Naive thymus-derived CD4-positive, alpha-beta T cell (primary cell): ENCODE measurements at regions of chr19 and their contacts with region 1.

Region 1: DNA sequence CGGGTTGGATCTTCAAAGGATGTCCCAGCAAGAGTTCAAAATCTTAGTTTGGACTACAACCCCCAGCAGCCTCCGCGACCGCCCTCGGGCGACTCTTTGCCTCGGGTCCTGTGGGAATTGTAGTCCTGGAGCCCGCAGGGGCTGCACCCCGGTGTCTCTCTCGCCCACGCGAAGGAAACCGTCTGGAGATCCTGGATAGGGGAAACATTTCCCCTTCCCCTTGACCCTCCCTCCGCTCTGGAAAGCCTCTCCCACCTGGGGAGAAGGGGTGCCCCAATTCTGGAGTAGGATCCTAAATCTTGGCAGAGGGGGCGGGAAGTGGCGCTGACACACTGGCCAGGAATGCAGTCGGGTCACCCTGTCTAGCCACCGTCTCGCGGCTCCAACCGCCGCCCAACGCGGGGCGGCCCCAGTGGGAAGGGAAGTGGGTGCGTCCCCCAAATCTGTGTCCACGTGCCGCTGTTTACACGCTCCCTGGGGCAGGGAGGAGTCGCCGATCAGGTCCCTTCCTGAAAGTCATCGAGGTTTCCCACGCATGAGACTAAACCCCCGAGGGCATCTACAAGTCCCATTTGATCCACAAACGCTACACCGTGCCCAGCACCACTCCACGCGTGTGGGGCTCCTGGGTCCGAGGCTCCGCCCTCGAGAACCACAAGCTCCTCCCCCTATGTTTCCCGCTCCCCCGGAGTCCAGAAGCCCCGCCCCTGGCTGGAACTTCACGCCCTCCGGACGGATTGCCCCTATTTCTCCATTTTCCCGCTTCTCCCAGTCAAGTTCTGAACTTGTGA is 761 bp upstream of the PPP1R13L start:
- DNase-seq: peak; percentile 62 to 88 (median 81)
- ATAC-seq: peak; percentile 75
- H3K4me3 ChIP-seq: peak overlapping the region; percentile 77
- H3K4me3 Mint-ChIP-seq: peak overlapping the region; percentile 91 to 99 (median 97)
- H3K27ac ChIP-seq: peak overlapping the region; percentile 71
- H3K27ac Mint-ChIP-seq: peak overlapping the region; percentile 90 to 99 (median 94)
- H3K4me1 ChIP-seq: peaks cover 16 to 25% of the 10 kb centered on the region in 2 donors
- H3K4me1 Mint-ChIP-seq: peaks cover 28 to 53% (median 32%) of the 10 kb centered on the region in 7 donors
- H3K27me3 ChIP-seq: peaks cover 10 to 18% of the 10 kb centered on the region in 2 donors
- H3K27me3 Mint-ChIP-seq: peaks cover 15 to 27% (median 21%) of the 10 kb centered on the region in 5 donors

Region 2: GRCh38 chr19:44890366-44891015 is 515.1 kb before region 1 on chr19:
- CTCF ChIA-PET with region 1: no interaction called
- POLR2A ChIA-PET with region 1: no interaction called
- intact Hi-C with region 1: loop called in 1 of 2 experiments (anchors 1 kb)
- DNase-seq: peak; percentile 97 to 100 (median 100)
- ATAC-seq: peak; percentile 86
- H3K4me3 ChIP-seq: peak overlapping the region; percentile 69
- H3K4me3 Mint-ChIP-seq: peak overlapping the region; percentile 83 to 93 (median 89)
- H3K27ac ChIP-seq: peak overlapping the region; percentile 84
- H3K27ac Mint-ChIP-seq: peak overlapping the region; percentile 90 to 96 (median 94)
- H3K4me1 ChIP-seq: peaks cover 10 to 20% of the 10 kb centered on the region in 2 donors
- H3K4me1 Mint-ChIP-seq: peaks cover 18 to 44% (median 35%) of the 10 kb centered on the region in 7 donors
- H3K27me3 ChIP-seq: no peaks in the 10 kb centered on the region
- H3K27me3 Mint-ChIP-seq: no peaks in the 10 kb centered on the region

Region 3: GRCh38 chr19:45250832-45251451 is 154.7 kb before region 1 on chr19 and contains the start of gene MARK4:
- CTCF ChIA-PET with region 1: no interaction called
- POLR2A ChIA-PET with region 1: no interaction called
- intact Hi-C with region 1: loop called in 1 of 2 experiments (anchors 5 kb)
- DNase-seq: peak in 8 of 9 donors; percentile 32 to 70 (median 51)
- ATAC-seq: peak; percentile 80
- H3K4me3 ChIP-seq: peak within 1 kb of the TSS; percentile 63
- H3K4me3 Mint-ChIP-seq: peak within 1 kb of the TSS; percentile 87 to 96 (median 94)
- H3K27ac ChIP-seq: peak within 1 kb of the TSS; percentile 72
- H3K27ac Mint-ChIP-seq: peak within 1 kb of the TSS; percentile 28 to 90 (median 81)
- H3K4me1 ChIP-seq: peaks cover 19 to 20% of the 10 kb centered on the region in 2 donors
- H3K4me1 Mint-ChIP-seq: peaks cover 23 to 42% (median 35%) of the 10 kb centered on the region in 7 donors
- H3K27me3 ChIP-seq: no peaks in the 10 kb centered on the region
- H3K27me3 Mint-ChIP-seq: peaks cover 0 to 5% (median 0%) of the 10 kb centered on the region in 5 donors
- total RNA-seq, gene MARK4: 22.4 to 39.2 (median 25.5) TPM

Region 4: DNA sequence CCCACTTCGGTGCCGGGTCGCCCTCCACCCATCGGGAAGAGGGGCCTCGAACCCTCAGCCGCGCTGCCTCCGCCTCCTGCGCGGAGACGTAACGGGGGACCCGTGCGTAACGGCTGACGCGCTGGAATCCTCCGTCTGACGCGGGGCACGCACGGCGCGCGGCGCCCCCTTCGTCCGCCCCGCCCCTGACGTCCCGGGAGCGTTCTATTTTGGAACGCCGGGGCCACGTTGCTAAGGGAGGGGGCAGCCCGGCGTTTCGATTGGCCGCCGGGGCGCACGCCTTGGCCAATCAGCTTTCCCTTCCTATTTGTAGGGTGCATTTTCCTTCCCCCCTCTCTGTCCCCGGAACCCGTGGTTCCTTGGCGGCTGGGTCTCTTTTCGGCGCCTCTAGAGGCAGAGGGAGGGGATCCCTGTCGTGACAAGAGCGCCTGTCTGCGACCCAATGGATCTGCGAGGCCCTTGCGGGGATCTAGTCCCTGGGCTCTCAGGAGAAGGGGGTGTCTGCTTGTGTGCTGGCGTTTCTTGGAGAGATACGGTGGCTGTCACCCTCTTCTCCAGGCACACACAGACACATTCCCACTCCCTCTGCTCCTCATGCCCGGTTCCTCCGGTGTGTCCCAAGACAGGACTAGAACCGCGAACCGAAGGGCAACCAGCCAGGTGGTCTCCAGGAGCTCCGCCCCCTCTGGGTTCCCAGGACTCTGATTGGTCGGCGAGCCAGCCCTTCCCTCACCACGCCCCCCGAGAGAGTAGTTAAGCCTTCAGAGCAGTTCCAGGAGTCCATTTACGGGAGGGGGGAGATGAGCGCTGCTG is 63.7 kb after region 1 on chr19:
- CTCF ChIA-PET with region 1: no interaction called
- POLR2A ChIA-PET with region 1: no interaction called
- intact Hi-C with region 1: loop called in 1 of 2 experiments (anchors 1 kb)
- DNase-seq: peak; percentile 79 to 98 (median 97)
- ATAC-seq: peak; percentile 70
- H3K4me3 ChIP-seq: peak overlapping the region; percentile 99
- H3K4me3 Mint-ChIP-seq: peak overlapping the region; percentile 87 to 96 (median 94)
- H3K27ac ChIP-seq: peak overlapping the region; percentile 98
- H3K27ac Mint-ChIP-seq: peak overlapping the region; percentile 90 to 100 (median 99)
- H3K4me1 ChIP-seq: peaks cover 10 to 16% of the 10 kb centered on the region in 2 donors
- H3K4me1 Mint-ChIP-seq: peaks cover 5 to 39% (median 19%) of the 10 kb centered on the region in 7 donors
- H3K27me3 ChIP-seq: no peaks in the 10 kb centered on the region
- H3K27me3 Mint-ChIP-seq: peaks cover 9 to 57% (median 17%) of the 10 kb centered on the region in 5 donors

Region 5: DNA sequence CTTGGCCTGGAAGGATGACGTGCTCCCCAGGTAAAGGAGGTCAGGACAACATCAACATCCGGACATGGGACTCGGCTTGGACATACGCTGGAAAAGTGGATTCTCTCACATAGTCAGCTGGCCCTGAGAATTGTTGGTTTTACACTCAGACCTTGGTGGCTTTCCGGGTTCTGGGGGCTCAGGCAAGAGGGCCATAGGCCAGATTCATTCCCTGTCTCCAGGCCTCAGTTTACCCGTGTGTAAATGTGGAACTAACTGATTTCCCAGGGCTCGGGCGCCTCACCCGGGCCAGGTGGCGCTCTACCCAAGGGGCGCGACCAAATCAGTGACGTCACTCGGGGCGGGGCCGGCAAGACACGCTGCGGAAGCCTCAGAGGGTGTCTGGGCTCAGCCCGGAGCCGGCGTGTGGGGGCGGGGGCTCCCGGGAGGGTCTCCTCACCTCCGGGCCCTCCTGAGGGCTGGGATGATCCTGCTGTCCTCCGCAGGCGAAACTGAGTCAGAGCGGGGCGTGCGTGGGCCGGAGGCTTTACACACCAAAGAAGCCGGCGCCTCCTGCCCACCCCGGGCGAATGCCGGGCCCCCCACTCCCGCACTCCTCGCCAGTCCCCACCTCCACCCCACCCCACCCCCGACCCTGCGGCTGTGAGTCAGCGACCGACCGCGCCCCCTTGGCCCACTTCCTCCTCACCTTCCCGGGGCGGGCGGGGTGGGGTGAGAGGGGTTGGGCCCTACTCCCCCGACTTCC is 100.8 kb after region 1 on chr19:
- CTCF ChIA-PET with region 1: no interaction called
- POLR2A ChIA-PET with region 1: no interaction called
- intact Hi-C with region 1: loop called (anchors 1 kb)
- DNase-seq: peak; percentile 95 to 99 (median 98)
- ATAC-seq: peak; percentile 88
- H3K4me3 ChIP-seq: peak overlapping the region; percentile 99
- H3K4me3 Mint-ChIP-seq: peak overlapping the region; percentile 91 to 96 (median 94)
- H3K27ac ChIP-seq: peak overlapping the region; percentile 87
- H3K27ac Mint-ChIP-seq: peak overlapping the region; percentile 91 to 98 (median 97)
- H3K4me1 ChIP-seq: peaks cover 14 to 20% of the 10 kb centered on the region in 2 donors
- H3K4me1 Mint-ChIP-seq: peaks cover 29 to 46% (median 34%) of the 10 kb centered on the region in 7 donors
- H3K27me3 ChIP-seq: no peaks in the 10 kb centered on the region
- H3K27me3 Mint-ChIP-seq: no peaks in the 10 kb centered on the region

Region 6: GRCh38 chr19:45670670-45671453 is 265.2 kb after region 1 on chr19:
- CTCF ChIA-PET with region 1: no interaction called
- POLR2A ChIA-PET with region 1: no interaction called
- intact Hi-C with region 1: no loop called
- DNase-seq: peak in 4 of 9 donors; percentile 14 to 87 (median 31)
- ATAC-seq: peak; percentile 58
- H3K4me3 ChIP-seq: no peak overlapping the region
- H3K4me3 Mint-ChIP-seq: peak overlapping the region in 8 of 10 donors; percentile 39 to 96 (median 74)
- H3K27ac ChIP-seq: no peak overlapping the region
- H3K27ac Mint-ChIP-seq: peak overlapping the region in 1 of 9 donors; percentile 13
- H3K4me1 ChIP-seq: peaks cover 15 to 25% of the 10 kb centered on the region in 2 donors
- H3K4me1 Mint-ChIP-seq: peaks cover 30 to 39% (median 32%) of the 10 kb centered on the region in 7 donors
- H3K27me3 ChIP-seq: no peaks in the 10 kb centered on the region
- H3K27me3 Mint-ChIP-seq: peaks cover 0 to 22% (median 17%) of the 10 kb centered on the region in 5 donors

Region 7: DNA sequence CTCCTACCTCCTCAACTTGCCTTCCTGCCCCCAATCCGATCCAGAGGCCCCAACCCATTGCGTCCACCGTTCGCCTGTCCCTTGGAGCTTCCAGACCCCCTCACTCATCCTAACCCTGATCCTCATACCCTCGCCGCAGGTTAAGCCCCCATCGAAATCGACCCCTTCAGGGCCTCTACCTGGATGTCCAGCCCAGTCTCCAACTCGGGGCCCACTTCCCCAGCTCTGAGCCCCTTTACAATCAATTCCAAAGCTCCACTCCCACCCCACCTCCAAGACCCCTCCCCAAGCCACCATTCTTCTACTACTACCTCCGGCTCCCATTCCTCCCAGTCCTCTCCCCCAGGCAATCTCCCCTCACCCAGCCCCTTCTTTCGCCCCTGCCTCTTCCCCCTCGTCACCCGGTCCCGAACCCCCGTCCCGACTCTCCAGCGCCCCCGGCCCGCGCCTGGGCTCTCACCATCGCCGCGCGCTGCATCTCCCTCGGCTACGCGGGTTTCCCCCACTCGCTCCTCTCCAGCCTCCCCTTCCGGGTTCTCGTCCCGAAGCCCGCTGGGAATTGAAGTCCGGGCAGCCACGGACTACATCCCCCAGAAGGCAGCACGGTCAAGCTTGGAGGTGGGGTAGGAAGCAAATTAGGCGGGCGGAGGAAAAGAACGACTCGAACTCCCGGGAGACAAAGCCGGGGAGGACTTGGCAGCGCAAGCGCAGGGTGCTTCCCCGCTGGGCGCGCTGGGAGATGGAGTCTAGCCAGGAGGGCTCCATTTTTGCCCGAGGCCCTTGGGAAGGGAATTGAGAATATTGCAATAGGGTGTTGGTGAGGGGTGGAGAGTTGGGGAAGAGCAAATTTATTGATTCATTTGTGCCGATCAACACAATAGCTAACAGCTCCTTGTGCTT is 325.0 kb after region 1 on chr19 and contains the start of gene FBXO46:
- CTCF ChIA-PET with region 1: no interaction called
- POLR2A ChIA-PET with region 1: no interaction called
- intact Hi-C with region 1: loop called in 1 of 2 experiments (anchors 5 kb)
- DNase-seq: peak; percentile 74 to 94 (median 90)
- ATAC-seq: peak; percentile 99
- H3K4me3 ChIP-seq: peak within 1 kb of the TSS; percentile 96
- H3K4me3 Mint-ChIP-seq: peak within 1 kb of the TSS; percentile 85 to 98 (median 92)
- H3K27ac ChIP-seq: peak within 1 kb of the TSS; percentile 92
- H3K27ac Mint-ChIP-seq: peak within 1 kb of the TSS; percentile 60 to 93 (median 91)
- H3K4me1 ChIP-seq: peaks cover 6 to 14% of the 10 kb centered on the region in 2 donors
- H3K4me1 Mint-ChIP-seq: peaks cover 27 to 41% (median 33%) of the 10 kb centered on the region in 7 donors
- H3K27me3 ChIP-seq: no peaks in the 10 kb centered on the region
- H3K27me3 Mint-ChIP-seq: peaks cover 0 to under 1% (median 0%) of the 10 kb centered on the region in 5 donors
- total RNA-seq, gene FBXO46: 21.2 to 52.9 (median 36.6) TPM

Region 8: DNA sequence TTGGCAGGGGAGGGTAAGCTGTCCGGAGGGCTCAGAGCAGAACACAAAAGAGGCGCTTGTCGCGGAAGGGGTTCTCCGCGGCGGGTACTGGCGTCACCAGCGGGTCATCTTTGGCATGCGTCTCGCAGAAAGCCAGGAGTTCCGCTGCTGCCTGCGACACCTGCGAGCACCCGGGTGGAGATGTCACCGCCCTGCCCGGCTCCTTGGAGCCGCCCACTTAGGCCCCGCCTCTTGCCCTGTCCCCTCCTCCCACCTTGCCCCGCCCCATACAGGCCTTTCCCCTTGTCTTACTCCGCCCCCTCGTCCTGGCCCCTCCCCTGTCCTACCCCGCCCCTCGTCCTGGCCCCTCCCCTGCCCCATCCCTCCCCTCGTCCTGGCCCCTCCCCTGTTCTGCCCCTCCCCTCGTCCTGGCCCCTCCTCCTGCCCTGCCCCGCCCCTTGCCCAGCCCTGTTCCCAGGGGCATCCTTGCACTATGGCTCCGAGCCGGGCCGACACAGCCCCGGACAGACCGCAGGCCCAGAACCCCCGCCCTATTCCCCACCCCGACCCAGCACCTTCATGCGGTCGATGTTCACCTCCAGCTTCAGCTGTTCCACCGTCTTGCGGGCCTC is 1228.5 kb after region 1 on chr19:
- CTCF ChIA-PET with region 1: no interaction called
- POLR2A ChIA-PET with region 1: no interaction called
- intact Hi-C with region 1: loop called in 1 of 2 experiments (anchors 5 kb)
- DNase-seq: peak; percentile 86 to 99 (median 97)
- ATAC-seq: peak; percentile 91
- H3K4me3 ChIP-seq: peak overlapping the region; percentile 62
- H3K4me3 Mint-ChIP-seq: peak overlapping the region in 9 of 10 donors; percentile 81 to 90 (median 87)
- H3K27ac ChIP-seq: peak overlapping the region; percentile 90
- H3K27ac Mint-ChIP-seq: peak overlapping the region in 8 of 9 donors; percentile 66 to 98 (median 94)
- H3K4me1 ChIP-seq: peaks cover 22 to 23% of the 10 kb centered on the region in 2 donors
- H3K4me1 Mint-ChIP-seq: peaks cover 10 to 32% (median 23%) of the 10 kb centered on the region in 7 donors
- H3K27me3 ChIP-seq: no peaks in the 10 kb centered on the region
- H3K27me3 Mint-ChIP-seq: peaks cover 0 to 13% (median 0%) of the 10 kb centered on the region in 5 donors